ENCODE measurements at regions of chr2 and their contacts with region 1.

Region 1: GRCh38 chr2:44941551-44942234 is at the start of gene SIX3:
- DNase-seq: peak; percentile 53
- H3K4me3 ChIP-seq: peak within 1 kb of the TSS in 1 of 2 donors; percentile 29
- H3K27ac ChIP-seq: no peak within 1 kb of the TSS
- H3K4me1 ChIP-seq: peaks cover 19% of the 10 kb centered on the region
- H3K27me3 ChIP-seq: peaks cover 5% of the 10 kb centered on the region
- CTCF ChIP-seq: no peak
- POLR2A ChIP-seq: no peak
- total RNA-seq, gene SIX3: 0.19 to 0.47 TPM

Region 2: GRCh38 chr2:44479122-44479887 is 462.4 kb before region 1 on chr2:
- intact Hi-C with region 1: loop called (anchors 10 kb)
- DNase-seq: peak; percentile 62
- H3K4me3 ChIP-seq: no peak overlapping the region
- H3K27ac ChIP-seq: no peak overlapping the region
- H3K4me1 ChIP-seq: no peaks in the 10 kb centered on the region
- H3K27me3 ChIP-seq: no peaks in the 10 kb centered on the region
- CTCF ChIP-seq: peak; percentile 93 to 99 (median 94)
- POLR2A ChIP-seq: no peak

Measured in testis (tissue), 5 donors.